Mammary epithelial cell (primary cell): ENCODE measurements at regions of chr3 and their contacts with region 1.

Region 1: GRCh38 chr3:187319699-187320302 is 28.3 kb upstream of the MASP1 start:
- DNase-seq: peak; percentile 59
- H3K4me3 ChIP-seq: no peak overlapping the region
- H3K27ac ChIP-seq: no peak overlapping the region
- H3K4me1 ChIP-seq: peaks cover 8% of the 10 kb centered on the region
- H3K27me3 ChIP-seq: no peaks in the 10 kb centered on the region
- CTCF ChIP-seq: peak; percentile 72 to 98

Region 2: GRCh38 chr3:186839874-186840641 is 479.7 kb before region 1 on chr3:
- CTCF ChIA-PET with region 1: no interaction called
- dilution Hi-C with region 1: loop called (anchors 10 kb)
- in situ Hi-C with region 1: no loop called
- intact Hi-C with region 1: loop called (anchors 10 kb)
- DNase-seq: no peak
- H3K4me3 ChIP-seq: no peak overlapping the region
- H3K27ac ChIP-seq: no peak overlapping the region
- H3K4me1 ChIP-seq: no peaks in the 10 kb centered on the region
- H3K27me3 ChIP-seq: no peaks in the 10 kb centered on the region
- CTCF ChIP-seq: no peak

Region 3: DNA sequence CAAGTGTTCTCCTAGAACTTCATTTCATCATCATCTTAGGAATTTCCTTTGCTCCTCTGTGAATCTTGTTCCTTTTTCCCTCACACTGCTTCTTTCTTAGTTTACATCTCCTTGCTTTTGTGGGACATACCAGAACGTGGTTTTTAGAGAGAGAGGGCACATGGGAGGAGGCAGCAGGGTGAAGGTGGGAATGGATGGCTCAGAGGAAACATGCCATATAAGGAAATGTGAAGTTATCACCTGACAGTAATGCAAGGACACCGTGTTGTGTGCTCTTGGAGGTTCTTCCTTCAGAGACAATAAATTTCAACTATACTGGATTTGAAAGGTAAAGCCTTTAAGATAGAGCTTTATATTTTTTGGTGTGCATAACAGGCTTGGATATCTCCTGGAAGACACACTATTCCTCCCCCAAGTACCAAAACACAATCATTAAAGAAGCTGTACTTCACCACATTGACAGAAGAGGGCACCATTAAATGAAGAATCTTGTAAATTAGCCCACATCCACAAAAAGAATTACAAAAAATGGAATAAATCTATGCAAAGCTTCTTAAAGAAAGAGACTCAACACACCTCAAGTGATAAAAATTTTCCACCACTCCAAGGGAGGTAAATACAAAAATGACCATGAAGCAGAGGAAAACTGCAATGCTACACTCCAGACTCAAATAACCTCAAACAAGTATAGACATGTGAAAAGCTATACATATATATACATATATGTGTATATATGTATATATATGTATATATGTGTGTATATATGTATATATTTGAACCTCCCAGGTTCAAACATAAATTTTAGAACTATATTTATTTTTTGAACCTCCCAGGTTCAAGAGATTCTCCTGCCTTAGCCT is 206.6 kb before region 1 on chr3:
- CTCF ChIA-PET with region 1: no interaction called
- dilution Hi-C with region 1: no loop called
- in situ Hi-C with region 1: no loop called
- intact Hi-C with region 1: loop called (anchors 5 kb)
- DNase-seq: peak; percentile 24
- H3K4me3 ChIP-seq: no peak overlapping the region
- H3K27ac ChIP-seq: no peak overlapping the region
- H3K4me1 ChIP-seq: peaks cover 7% of the 10 kb centered on the region
- H3K27me3 ChIP-seq: no peaks in the 10 kb centered on the region
- CTCF ChIP-seq: peak; percentile 48 to 54

Region 4: GRCh38 chr3:187616307-187616972 is 296.6 kb after region 1 on chr3:
- CTCF ChIA-PET with region 1: no interaction called
- dilution Hi-C with region 1: no loop called
- in situ Hi-C with region 1: no loop called
- intact Hi-C with region 1: loop called (anchors 1 kb)
- DNase-seq: peak; percentile 23
- H3K4me3 ChIP-seq: no peak overlapping the region
- H3K27ac ChIP-seq: no peak overlapping the region
- H3K4me1 ChIP-seq: no peaks in the 10 kb centered on the region
- H3K27me3 ChIP-seq: no peaks in the 10 kb centered on the region
- CTCF ChIP-seq: peak; percentile 81 to 90

Region 5: GRCh38 chr3:187714404-187714979 is 394.7 kb after region 1 on chr3:
- CTCF ChIA-PET with region 1: interaction called, 10 read pairs
- dilution Hi-C with region 1: no loop called
- in situ Hi-C with region 1: loop called in 1 of 2 experiments (anchors 5 kb)
- intact Hi-C with region 1: loop called (anchors 1 kb)
- DNase-seq: peak; percentile 70
- H3K4me3 ChIP-seq: no peak overlapping the region
- H3K27ac ChIP-seq: no peak overlapping the region
- H3K4me1 ChIP-seq: no peaks in the 10 kb centered on the region
- H3K27me3 ChIP-seq: no peaks in the 10 kb centered on the region
- CTCF ChIP-seq: peak; percentile 96 to 98